Lower leg skin (tissue), 4 donors: ENCODE measurements at regions of chr1 and their contacts with region 1.

Region 1: DNA sequence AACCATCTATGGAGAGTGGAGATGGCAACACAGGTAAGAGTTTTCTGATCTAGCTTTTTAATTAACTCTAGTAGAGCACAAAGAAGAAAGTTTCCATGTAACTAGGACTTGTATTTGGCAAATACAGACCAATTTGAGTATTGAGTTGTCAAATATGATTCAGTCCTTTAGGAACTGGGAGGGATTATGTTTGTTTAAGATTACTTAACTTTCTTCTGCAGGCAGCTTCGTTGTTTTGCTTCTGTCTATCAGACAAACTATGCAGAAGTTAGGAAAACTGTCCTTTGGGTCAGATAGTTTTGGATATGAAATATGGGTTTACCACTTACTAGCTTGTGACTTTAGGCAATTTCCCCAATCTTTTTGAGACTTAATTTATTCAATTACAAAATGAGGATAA is 111.8 kb downstream of the POU2F1 start:
- DNase-seq: no peak
- H3K4me3 ChIP-seq: no peak overlapping the region
- CTCF ChIP-seq: no peak
- POLR2A ChIP-seq: no peak

Region 2: DNA sequence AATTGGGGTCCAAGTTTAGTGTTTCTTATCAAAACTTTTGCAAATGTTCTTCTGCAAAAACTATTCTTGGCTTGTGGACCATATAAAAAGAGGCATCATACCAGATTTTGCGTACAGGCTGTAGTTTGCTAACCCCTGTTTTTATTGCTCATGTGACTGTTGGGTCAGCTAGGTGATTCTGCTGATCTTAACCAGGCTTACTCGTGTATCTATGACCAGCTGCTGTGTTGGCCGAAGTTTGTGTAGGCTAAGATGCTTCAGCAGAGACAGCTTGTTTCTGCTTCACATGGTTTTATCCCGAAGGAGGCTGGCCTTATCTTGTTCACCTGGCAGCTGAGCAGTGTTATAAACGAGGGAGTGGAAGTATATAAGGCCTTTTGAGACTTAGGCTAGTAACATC is 73.6 kb before region 1 on chr1:
- intact Hi-C with region 1: loop called (anchors 2 kb)
- DNase-seq: no peak
- H3K4me3 ChIP-seq: no peak overlapping the region
- CTCF ChIP-seq: no peak
- POLR2A ChIP-seq: no peak

Region 3: GRCh38 chr1:167273027-167273800 is 59.3 kb before region 1 on chr1:
- intact Hi-C with region 1: no loop called
- DNase-seq: no peak
- H3K4me3 ChIP-seq: no peak overlapping the region
- CTCF ChIP-seq: no peak
- POLR2A ChIP-seq: no peak